PC-3 (cell line): ENCODE measurements at regions of chr1 and their contacts with region 1.

Region 1: DNA sequence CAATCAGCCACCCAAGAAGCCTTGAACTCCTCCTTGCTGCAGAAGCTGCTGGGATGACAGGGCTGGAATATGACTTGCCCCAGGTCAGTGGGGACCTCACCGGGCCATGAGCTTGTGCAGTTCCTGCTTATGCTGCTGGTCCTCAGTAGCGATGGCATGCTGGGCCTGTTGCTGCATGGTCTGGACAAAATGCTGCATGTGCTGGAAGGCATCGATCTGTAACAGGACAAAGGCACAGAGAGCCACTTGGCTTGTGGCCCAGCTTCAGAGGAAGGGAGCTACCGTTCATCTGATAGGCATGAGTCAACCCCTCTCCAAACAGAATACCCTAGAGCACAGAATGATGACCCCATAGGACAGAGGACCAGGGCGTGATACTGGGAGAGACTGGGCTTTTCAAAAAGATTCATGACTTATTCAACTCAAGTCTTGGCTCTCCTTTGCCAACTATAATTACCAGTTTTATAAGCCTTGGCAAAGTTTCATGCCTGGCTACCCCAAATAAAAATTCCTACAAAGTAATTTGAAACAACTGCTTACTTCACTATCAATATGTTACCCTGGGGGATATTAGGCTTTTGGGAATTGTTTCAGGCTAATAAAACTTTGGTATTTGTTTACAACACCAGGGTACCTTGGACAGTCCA is 34.7 kb upstream of the EXOSC10 start:
- DNase-seq: peak; percentile 95
- ATAC-seq: peak; percentile 90
- H3K4me3 ChIP-seq: peak overlapping the region; percentile 15; the same call in 1 of the 2 replicates
- H3K27ac ChIP-seq: peak overlapping the region; percentile 86
- H3K4me1 ChIP-seq: peaks cover 45% of the 10 kb centered on the region
- H3K27me3 ChIP-seq: no peaks in the 10 kb centered on the region
- CTCF ChIP-seq: no peak

Region 2: GRCh38 chr1:11099310-11100149 is 34.8 kb before region 1 on chr1 and contains the start of gene EXOSC10:
- CTCF ChIA-PET with region 1: no interaction called
- POLR2A ChIA-PET with region 1: interaction called, 3 read pairs
- intact Hi-C with region 1: loop called (anchors 2 kb)
- DNase-seq: peak; percentile 91
- ATAC-seq: peak; percentile 93
- H3K4me3 ChIP-seq: peak within 1 kb of the TSS; percentile 81
- H3K27ac ChIP-seq: peak within 1 kb of the TSS; percentile 44
- H3K4me1 ChIP-seq: peaks cover 16% of the 10 kb centered on the region
- H3K27me3 ChIP-seq: no peaks in the 10 kb centered on the region
- CTCF ChIP-seq: no peak
- total RNA-seq, gene EXOSC10: 95.9 and 96.3 TPM in 2 replicates

Region 3: DNA sequence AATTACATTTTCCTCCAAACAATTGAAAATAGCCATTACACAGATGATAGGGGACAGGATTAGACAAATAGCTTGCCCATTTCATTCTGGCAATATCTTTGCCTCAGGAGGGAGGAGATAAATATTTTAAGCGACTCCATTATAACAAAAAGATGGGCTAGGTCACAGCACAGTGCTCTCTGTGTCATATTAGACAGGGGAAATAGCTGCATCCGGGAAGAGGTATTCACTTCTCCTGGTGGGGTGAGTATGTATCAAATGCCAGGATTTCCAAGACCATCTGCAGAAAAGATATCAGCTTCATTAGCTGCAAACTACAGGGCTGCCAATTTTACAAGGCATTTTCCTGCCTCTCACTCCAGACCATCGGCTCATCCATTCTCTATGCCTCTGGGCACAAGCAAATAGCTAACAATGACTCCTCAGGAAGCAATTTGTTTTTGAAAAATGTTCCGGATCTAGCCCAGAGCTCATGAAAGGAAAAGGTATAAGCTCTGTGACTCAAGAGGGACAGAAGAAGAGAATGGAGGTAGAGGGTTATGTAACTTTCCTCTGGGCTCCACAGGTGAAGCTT is 12.9 kb after region 1 on chr1:
- CTCF ChIA-PET with region 1: no interaction called
- POLR2A ChIA-PET with region 1: interaction called, 5 read pairs
- intact Hi-C with region 1: loop called (anchors 1 kb)
- DNase-seq: peak; percentile 93
- ATAC-seq: peak; percentile 92
- H3K4me3 ChIP-seq: no peak overlapping the region
- H3K27ac ChIP-seq: peak overlapping the region; percentile 84
- H3K4me1 ChIP-seq: peaks cover 41% of the 10 kb centered on the region
- H3K27me3 ChIP-seq: no peaks in the 10 kb centered on the region
- CTCF ChIP-seq: no peak

Region 4: GRCh38 chr1:11158720-11159321 is 24.4 kb after region 1 on chr1:
- CTCF ChIA-PET with region 1: interaction called, 4 read pairs
- POLR2A ChIA-PET with region 1: no interaction called
- intact Hi-C with region 1: loop called (anchors 1 kb)
- DNase-seq: peak; percentile 92
- ATAC-seq: peak; percentile 77
- H3K4me3 ChIP-seq: no peak overlapping the region
- H3K27ac ChIP-seq: peak overlapping the region; percentile 86
- H3K4me1 ChIP-seq: peaks cover 39% of the 10 kb centered on the region
- H3K27me3 ChIP-seq: no peaks in the 10 kb centered on the region
- CTCF ChIP-seq: no peak

Region 5: GRCh38 chr1:11180342-11180744 is 46.0 kb after region 1 on chr1:
- CTCF ChIA-PET with region 1: no interaction called
- POLR2A ChIA-PET with region 1: no interaction called
- intact Hi-C with region 1: loop called (anchors 1 kb)
- DNase-seq: peak; percentile 86
- ATAC-seq: peak; percentile 79
- H3K4me3 ChIP-seq: no peak overlapping the region
- H3K27ac ChIP-seq: peak overlapping the region; percentile 55
- H3K4me1 ChIP-seq: peaks cover 34% of the 10 kb centered on the region
- H3K27me3 ChIP-seq: no peaks in the 10 kb centered on the region
- CTCF ChIP-seq: no peak

Region 6: DNA sequence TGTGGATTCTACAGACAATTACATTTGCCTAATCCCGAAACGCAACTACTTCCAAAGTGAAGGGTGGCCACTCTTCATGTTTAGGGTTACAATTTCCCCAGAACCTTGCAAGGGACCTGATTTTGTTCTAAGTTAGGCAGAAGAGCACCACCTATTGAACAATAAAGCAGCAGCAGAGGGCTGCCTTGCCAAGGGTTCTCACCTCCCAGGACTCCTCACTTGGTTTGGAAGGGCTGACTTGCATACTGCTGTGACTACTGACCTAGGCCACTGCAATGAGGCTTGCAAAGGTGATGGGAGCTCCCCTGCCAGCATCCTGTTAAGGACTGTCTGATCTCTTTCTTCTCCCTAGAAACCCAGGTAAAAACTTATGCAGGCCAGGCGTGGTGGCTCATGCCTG is 113.8 kb after region 1 on chr1:
- CTCF ChIA-PET with region 1: no interaction called
- POLR2A ChIA-PET with region 1: no interaction called
- intact Hi-C with region 1: no loop called
- DNase-seq: peak; percentile 3
- ATAC-seq: peak; percentile 53; the same call in 1 of the 2 replicates
- H3K4me3 ChIP-seq: no peak overlapping the region
- H3K27ac ChIP-seq: no peak overlapping the region
- H3K4me1 ChIP-seq: no peaks in the 10 kb centered on the region
- H3K27me3 ChIP-seq: no peaks in the 10 kb centered on the region
- CTCF ChIP-seq: peak; percentile 33; the same call in 1 of the 2 replicates